Activated CD4-positive, alpha-beta T cell treated with anti-CD3 and anti-CD28 coated beads, Interleukin-2, amount 10 ng/mL, durations not matched to agents 24 days and 14 days (primary cell): ENCODE measurements at regions of chr22 and their contacts with region 1.

Region 1: DNA sequence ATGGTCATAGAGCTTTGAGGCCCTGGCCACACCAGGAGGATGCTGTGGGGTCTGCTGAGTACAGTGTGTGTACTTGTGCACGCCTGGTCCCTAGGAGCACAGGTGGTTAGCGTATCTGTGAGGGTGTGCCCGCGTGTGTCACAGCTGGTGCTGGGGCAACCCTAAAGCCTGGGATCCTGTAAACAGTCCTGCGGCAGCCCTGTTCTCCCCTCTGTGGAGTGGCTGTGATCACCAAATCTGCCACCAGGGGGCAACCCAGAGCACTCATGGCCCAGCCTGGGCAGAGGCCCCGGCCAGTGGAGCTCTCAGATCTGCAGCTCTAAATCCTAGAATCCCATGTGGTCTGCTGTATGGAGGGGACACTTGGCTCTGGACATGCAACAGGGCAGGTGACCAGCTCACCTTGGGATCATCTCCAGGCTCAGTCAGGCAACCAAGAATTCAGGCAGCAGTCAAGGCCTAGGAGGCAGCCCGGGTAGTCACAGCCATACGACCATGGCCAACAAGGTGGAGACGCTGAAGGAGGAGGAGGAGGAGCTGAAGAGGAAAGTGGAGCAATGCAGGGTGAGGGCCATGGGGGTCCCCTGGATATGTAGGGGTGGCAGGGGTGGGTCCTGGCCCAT is 3.9 kb downstream of the SH3BP1 start:
- DNase-seq: peak; percentile 96
- H3K4me3 Mint-ChIP-seq: peak overlapping the region; percentile 63
- H3K27ac Mint-ChIP-seq: peak overlapping the region; percentile 65
- H3K4me1 Mint-ChIP-seq: peaks cover 30% of the 10 kb centered on the region
- H3K27me3 Mint-ChIP-seq: no peaks in the 10 kb centered on the region

Region 2: DNA sequence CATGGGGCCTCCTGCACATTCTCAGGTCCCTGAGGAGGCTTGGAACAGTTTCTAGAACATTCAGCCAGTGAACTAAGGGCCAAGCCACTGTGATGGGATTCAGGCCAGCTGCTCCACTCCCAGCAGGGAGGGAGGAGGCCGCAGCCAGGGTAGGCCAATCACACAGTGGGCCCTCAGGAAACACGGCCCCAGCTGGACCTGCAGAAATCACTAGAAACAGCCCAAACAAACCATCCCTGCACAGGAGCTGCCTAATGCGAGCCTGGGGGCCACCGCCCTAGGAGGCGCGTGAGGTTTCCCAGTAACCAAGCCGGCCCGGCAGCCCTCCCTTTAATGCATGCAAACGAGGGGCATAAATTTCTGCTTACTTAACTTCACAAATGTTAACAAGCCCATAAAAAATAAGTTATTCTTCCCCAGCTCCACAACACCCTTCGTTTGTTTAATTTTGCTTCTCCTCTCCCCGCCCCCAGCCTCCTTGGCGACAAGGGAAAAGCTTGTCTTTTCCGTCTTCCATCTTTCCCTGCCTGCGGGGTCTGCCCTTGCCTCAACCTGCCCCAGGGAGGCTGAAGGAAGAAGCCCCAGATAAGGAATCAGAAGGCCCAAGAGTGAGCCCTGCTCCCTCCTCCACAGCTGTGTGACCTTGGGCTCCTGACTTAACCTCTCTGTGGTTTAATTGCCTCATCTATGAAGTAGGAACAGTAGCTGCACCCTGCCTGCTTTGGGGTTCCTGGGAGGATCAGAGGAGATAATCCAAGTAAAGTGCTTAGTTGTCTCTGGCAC is 241.7 kb before region 1 on chr22:
- intact Hi-C with region 1: no loop called
- DNase-seq: no peak
- H3K4me3 Mint-ChIP-seq: no peak overlapping the region
- H3K27ac Mint-ChIP-seq: no peak overlapping the region
- H3K4me1 Mint-ChIP-seq: no peaks in the 10 kb centered on the region
- H3K27me3 Mint-ChIP-seq: no peaks in the 10 kb centered on the region

Region 3: DNA sequence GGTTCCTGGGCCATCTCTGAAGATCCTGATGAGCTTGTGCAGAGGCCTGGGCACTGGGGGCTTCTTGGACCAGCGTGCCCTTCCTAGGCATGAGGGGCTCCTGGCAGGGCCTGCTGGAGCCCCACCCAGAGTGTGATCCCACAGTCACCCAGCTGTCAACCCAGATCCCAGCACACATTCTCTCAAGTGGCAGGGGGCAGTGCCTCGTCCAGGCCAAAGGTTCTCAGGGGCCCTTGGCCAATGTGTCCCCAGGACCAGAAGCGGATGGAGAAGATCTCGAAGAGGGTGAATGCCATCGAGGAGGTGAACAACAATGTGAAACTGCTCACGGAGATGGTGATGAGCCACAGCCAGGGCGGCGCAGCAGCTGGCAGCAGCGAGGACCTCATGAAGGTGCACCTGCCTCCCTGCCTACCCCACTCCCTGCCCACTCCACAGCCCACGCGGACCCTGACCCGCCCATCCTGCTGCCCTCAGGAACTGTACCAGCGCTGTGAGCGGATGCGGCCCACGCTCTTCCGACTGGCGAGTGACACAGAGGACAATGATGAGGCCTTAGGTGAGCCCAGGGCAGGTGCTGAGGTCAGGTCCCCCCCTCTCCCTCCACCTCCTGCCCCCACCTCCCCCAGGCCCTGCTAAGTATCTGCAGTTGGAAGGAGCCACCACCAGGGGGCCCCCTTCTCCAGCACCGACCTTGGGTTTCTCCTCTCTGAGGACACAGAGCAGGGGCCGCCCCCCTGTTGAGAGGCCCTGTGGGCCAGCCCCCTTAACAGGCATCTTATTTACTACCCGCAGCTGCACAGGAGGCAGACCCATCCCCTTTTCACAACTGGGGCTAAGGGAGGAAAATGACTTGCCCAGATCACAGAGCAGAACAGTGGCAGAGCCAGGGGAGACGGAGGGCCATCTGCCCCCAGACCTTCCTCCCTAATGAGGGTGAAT is 20.0 kb before region 1 on chr22:
- intact Hi-C with region 1: loop called (anchors 2 kb)
- DNase-seq: peak; percentile 92
- H3K4me3 Mint-ChIP-seq: no peak overlapping the region
- H3K27ac Mint-ChIP-seq: peak overlapping the region; percentile 80
- H3K4me1 Mint-ChIP-seq: peaks cover 17% of the 10 kb centered on the region
- H3K27me3 Mint-ChIP-seq: no peaks in the 10 kb centered on the region

Region 4: GRCh38 chr22:37658133-37659065 is 15.1 kb after region 1 on chr22 and contains the start of gene PDXP:
- intact Hi-C with region 1: loop called (anchors 2 kb)
- DNase-seq: peak; percentile 100
- H3K4me3 Mint-ChIP-seq: peak within 1 kb of the TSS; percentile 94
- H3K27ac Mint-ChIP-seq: peak within 1 kb of the TSS; percentile 91
- H3K4me1 Mint-ChIP-seq: peaks cover 35% of the 10 kb centered on the region
- H3K27me3 Mint-ChIP-seq: no peaks in the 10 kb centered on the region
- total RNA-seq, gene PDXP: 49.3 and 51.2 TPM in 2 replicates

Region 5: DNA sequence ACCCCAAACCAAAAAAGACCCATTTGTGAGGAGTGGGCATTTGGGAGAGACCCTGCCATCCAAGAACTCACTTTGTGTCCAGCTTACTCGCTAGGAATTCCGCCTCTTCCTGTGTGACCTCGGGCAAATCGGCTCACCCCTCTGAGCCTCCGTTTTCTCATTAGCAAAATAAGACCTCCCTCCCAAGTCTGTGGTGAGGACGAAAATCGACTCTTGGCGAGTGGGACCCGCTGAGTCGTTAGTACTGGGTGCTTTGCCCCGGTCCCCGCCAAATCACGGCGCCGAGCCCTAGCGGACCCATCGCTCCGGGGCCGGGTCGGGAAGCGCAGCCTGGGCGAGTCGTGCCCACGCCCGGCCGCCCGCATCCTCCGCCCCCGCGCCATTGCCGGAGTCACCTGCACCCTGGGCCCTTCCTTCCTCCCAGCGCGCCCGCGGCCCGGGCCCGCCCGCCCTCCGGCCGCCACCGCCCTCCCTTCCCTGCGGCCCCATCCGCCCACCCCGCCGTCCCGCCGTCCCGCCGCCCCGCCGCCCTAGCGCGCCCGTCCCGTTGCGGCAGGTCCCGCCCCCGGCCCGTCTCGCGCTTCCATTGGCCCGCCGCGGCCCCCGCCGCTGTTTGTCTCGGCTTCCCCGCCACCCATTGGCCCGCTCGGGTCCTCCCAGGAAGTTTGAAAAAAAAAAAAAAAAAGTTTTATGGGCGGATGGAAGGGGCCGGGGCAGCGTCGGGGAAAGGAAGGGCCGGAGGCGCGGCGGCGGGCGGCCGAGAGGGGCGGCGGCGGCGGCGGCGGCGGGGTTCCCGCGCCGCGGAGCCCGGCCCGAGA is 102.4 kb after region 1 on chr22:
- intact Hi-C with region 1: loop called (anchors 5 kb)
- DNase-seq: peak; percentile 96
- H3K4me3 Mint-ChIP-seq: peak overlapping the region; percentile 89
- H3K27ac Mint-ChIP-seq: peak overlapping the region; percentile 86
- H3K4me1 Mint-ChIP-seq: peaks cover 30% of the 10 kb centered on the region
- H3K27me3 Mint-ChIP-seq: no peaks in the 10 kb centered on the region